ENCODE measurements at regions of chr16 and their contacts with region 1.

Region 1: GRCh38 chr16:57725554-57726330 is 9.8 kb upstream of the KATNB1 start:
- DNase-seq: no peak
- ATAC-seq: no peak
- H3K4me3 ChIP-seq: no peak overlapping the region
- H3K27ac ChIP-seq: no peak overlapping the region
- H3K4me1 ChIP-seq: no peaks in the 10 kb centered on the region
- H3K27me3 ChIP-seq: no peaks in the 10 kb centered on the region
- CTCF ChIP-seq: no peak
- POLR2A ChIP-seq: no peak

Region 2: GRCh38 chr16:57653936-57654335 is 71.8 kb before region 1 on chr16:
- intact Hi-C with region 1: loop called (anchors 5 kb)
- DNase-seq: no peak
- ATAC-seq: no peak
- H3K4me3 ChIP-seq: no peak overlapping the region
- H3K27ac ChIP-seq: no peak overlapping the region
- H3K4me1 ChIP-seq: no peaks in the 10 kb centered on the region
- H3K27me3 ChIP-seq: no peaks in the 10 kb centered on the region
- CTCF ChIP-seq: no peak
- POLR2A ChIP-seq: no peak

Measured in body of pancreas (tissue), 4 donors.